Natural killer cell (primary cell): ENCODE measurements at regions of chr6 and their contacts with region 1.

Region 1: DNA sequence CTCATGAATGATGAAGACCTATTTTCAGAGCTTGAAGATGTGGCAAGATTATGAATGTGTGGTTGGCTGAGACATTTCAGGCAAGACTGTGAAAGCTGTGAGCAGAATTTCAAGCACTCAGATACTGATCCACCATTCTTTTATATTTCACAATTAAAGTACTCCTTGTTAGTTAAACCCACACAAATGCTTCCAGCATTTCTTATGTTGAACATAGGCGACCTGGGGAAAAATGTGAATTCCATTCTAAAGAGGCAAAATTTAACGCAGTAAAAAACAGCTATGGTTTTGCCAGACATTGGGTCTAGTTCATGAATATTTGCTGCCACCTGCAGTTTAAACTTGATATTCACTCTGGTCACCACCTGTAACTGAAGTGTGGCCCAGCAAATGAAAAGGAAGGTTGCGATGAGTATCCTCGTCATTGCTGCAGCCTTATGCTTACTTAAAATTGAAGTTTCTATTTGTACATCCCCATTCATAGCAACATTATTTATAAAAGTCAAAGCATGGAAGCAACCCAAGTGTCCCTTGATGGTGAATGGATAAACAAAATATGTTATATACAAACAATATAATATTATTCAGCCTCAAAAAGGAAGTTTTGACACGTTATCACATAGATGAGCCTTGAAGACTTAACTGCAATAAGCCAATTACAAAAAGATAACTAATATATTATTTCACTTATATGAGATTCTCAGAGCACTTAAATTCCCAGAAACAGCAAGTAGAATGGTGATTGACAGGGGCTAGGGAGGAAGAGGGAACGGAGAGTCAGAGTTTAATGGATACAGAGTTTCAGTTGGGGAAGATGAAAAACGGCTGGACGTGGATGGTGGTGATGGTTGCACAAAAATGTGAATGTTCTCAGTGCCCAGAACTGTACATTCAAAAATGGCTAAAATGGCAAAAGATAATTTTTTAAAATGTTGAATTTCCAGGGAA is 32.4 kb upstream of the FAM184A start:
- DNase-seq: peak in 1 of 2 donors; percentile 83
- ATAC-seq: peak; percentile 60 to 66 (median 64)
- H3K4me3 ChIP-seq: no peak overlapping the region
- H3K4me3 Mint-ChIP-seq: no peak overlapping the region
- H3K27ac ChIP-seq: no peak overlapping the region
- H3K27ac Mint-ChIP-seq: no peak overlapping the region
- H3K4me1 ChIP-seq: no peaks in the 10 kb centered on the region
- H3K4me1 Mint-ChIP-seq: no peaks in the 10 kb centered on the region
- H3K27me3 ChIP-seq: no peaks in the 10 kb centered on the region
- H3K27me3 Mint-ChIP-seq: peaks cover 14 to 27% of the 10 kb centered on the region in 2 donors
- CTCF ChIP-seq: peak; percentile 51

Region 2: GRCh38 chr6:118963003-118963402 is 147.9 kb before region 1 on chr6:
- intact Hi-C with region 1: loop called (anchors 1 kb)
- DNase-seq: peak in 1 of 2 donors; percentile 27
- ATAC-seq: no peak
- H3K4me3 ChIP-seq: no peak overlapping the region
- H3K4me3 Mint-ChIP-seq: no peak overlapping the region
- H3K27ac ChIP-seq: no peak overlapping the region
- H3K27ac Mint-ChIP-seq: no peak overlapping the region
- H3K4me1 ChIP-seq: no peaks in the 10 kb centered on the region
- H3K4me1 Mint-ChIP-seq: peaks cover 0 to 7% of the 10 kb centered on the region in 2 donors
- H3K27me3 ChIP-seq: no peaks in the 10 kb centered on the region
- H3K27me3 Mint-ChIP-seq: peaks cover 0 to 10% of the 10 kb centered on the region in 2 donors
- CTCF ChIP-seq: no peak

Region 3: DNA sequence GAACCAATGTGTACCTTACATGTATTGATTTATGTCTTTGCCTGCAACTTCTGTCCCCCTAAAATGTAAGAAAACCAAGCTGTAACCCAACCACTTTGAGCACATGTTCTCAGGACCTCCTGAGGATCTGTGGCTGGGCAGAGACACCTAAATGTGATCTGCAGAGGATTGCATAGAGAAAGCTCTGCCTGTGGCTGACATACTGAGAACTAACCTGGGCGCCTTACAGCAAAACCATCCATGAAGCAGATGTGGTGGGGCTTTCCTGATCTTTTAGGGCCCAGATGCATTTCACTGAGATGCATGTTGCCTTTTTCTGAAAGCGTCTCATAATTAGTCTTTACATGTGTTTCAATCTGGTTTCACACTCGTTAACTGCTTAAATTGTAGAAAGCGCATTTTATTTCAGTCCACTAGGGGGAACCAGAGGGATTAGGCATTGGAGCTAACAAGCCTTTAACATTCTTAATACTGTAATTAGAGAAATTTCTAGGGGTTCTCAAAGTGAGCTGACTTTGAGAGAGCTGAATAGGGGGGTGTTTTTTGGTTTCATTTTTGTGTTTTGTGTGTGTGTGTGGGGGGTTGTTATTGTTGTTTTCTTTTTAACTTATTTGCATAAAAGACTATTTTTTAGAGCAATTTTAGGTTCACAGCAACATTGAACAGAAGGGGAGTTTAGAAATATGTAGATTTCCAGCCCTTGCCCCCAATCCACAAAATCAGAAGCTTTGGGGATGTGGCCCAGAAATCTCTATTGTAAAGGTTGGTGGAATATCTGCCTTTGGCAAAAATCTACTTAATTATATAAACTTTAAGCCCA is 18.5 kb after region 1 on chr6:
- intact Hi-C with region 1: no loop called
- DNase-seq: peak in 1 of 2 donors; percentile 82
- ATAC-seq: peak; percentile 77 to 88 (median 85)
- H3K4me3 ChIP-seq: no peak overlapping the region
- H3K4me3 Mint-ChIP-seq: no peak overlapping the region
- H3K27ac ChIP-seq: no peak overlapping the region
- H3K27ac Mint-ChIP-seq: no peak overlapping the region
- H3K4me1 ChIP-seq: no peaks in the 10 kb centered on the region
- H3K4me1 Mint-ChIP-seq: peaks cover 5 to 8% of the 10 kb centered on the region in 2 donors
- H3K27me3 ChIP-seq: no peaks in the 10 kb centered on the region
- H3K27me3 Mint-ChIP-seq: no peaks in the 10 kb centered on the region
- CTCF ChIP-seq: peak; percentile 83